Activated CD4-positive, alpha-beta memory T cell treated with anti-CD3 and anti-CD28 coated beads, Interleukin-2, amount 10 ng/mL, durations not matched to agents 7 days and 5 days (primary cell): ENCODE measurements at regions of chr12 and their contacts with region 1.

Region 1: DNA sequence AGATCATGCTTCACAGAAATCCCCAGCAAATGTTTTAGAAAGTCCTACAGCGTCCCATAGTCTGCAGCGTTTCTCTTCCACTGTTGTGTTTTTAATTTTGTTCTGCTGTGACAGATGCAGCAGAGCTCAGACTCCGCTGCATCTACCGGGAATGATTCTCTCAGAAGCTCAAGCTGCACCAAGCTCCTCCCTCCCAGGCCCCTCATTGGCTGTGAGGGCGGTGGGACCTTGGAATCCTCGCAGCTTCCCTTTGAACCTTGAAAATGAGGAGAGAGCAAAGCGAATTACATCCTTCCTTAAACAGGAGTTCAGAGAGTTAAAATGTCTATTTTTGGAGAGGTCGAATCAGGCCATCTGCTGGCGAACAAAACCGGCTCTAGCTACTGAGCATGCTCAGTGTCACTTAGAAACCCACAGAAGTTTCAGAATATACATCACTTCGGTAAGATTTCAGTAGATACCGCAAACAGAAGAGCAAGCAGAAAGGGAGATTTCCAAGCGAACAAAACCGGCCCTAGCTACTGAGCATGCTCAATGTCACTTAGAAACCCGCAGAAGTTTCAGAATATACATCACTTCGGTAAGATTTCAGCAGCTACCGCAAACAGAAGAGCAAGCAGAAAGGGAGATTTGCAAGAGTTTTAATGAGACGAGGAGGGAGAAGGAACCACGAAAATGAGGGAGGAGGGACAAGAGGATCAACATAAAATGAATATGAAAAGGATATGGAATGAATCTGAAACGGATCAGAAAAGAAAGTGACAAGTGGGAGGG is at the start of gene ABCD2:
- DNase-seq: peak; percentile 84
- H3K4me3 Mint-ChIP-seq: no peak within 1 kb of the TSS
- H3K27ac Mint-ChIP-seq: no peak within 1 kb of the TSS
- H3K4me1 Mint-ChIP-seq: peaks cover 31% of the 10 kb centered on the region
- H3K27me3 Mint-ChIP-seq: no peaks in the 10 kb centered on the region
- total RNA-seq, gene ABCD2: 19.6 TPM

Region 2: DNA sequence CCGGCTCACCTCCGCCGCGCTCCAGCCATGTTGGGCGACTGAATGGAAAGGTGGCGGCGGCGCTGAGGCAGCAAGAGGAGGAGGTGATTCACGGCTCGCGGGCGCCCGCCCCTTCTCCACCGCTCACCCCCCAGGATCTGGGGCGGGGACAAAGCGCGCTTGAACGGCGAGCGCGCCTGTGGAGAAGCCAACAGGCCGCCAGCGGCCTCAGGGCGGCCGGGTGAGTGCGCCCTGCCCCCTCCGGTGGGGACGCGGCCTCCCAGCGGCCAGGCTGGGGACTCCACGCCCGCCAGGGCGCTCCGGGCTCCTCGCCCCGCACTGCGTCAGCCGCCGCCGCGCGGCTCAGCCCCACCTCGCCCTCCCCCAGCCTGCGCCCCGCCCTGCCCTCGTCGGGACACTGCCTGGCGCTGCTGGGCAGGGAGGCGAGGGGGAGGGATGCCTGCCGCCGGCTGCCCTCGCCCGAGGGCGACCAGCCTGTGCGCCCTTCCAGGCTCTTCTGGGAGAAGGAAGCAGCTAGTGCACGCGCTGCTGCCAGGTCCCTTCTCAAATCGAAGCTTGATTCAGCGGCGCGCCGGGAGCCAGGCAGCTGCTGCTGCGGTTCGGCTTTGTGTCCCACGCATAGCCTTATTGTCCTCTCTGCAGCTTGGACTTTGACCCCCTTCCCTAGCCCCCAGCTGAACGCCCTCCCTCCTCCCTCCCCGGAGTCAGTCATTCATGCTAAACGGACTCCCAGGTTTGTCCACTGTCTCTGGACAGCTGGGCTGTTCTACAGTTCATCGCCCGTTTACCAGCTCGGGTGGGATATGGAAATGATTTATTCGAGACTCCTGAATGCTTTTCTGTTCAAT is 176.5 kb before region 1 on chr12 and contains the start of gene KIF21A:
- CTCF ChIA-PET with region 1: interaction called, 6 read pairs
- POLR2A ChIA-PET with region 1: interaction called, 39 read pairs
- DNase-seq: peak; percentile 93
- H3K4me3 Mint-ChIP-seq: peak within 1 kb of the TSS; percentile 80
- H3K27ac Mint-ChIP-seq: peak within 1 kb of the TSS; percentile 79
- H3K4me1 Mint-ChIP-seq: peaks cover 23% of the 10 kb centered on the region
- H3K27me3 Mint-ChIP-seq: no peaks in the 10 kb centered on the region
- total RNA-seq, gene KIF21A: 18.4 to 19.7 TPM

Region 3: GRCh38 chr12:39671898-39672875 is 52.3 kb after region 1 on chr12:
- CTCF ChIA-PET with region 1: interaction called, 8 read pairs
- POLR2A ChIA-PET with region 1: interaction called, 35 read pairs
- DNase-seq: no peak
- H3K4me3 Mint-ChIP-seq: no peak overlapping the region
- H3K27ac Mint-ChIP-seq: no peak overlapping the region
- H3K4me1 Mint-ChIP-seq: peaks cover 48% of the 10 kb centered on the region
- H3K27me3 Mint-ChIP-seq: no peaks in the 10 kb centered on the region

Region 4: DNA sequence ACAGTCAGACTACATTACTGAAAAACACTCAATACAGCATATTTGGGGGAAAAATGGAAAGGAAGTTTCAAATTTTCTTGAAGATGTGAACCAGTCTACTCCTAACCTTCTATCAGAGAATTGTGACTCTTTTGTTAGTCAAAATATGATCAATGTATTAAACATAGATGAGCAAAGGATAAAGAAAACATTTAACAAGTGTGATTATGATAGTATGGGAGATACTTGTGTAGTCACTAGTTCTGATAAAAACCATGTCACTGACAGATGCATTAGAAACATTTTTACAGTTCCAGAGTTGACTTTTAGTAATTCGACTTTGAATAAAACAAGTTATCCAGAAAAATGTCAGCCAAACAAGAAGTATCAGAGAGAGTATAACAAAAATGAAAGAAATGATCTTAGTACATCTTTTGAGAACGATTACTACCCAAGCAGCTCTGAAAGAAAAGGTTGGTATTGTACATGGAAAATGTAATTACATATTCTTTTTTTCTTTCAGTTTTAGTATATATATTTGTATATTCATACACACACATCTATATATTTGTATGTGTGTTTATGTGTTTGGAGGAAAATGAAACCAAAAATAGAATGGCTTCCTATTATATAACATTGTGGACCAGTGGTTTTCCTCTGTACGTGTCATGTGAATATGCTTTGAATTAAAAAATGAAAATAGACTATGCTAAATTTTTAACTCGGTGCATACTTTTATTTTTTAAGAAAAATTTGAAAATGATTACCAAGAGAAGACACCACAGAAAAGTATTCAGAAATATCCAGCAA is 63.0 kb after region 1 on chr12:
- CTCF ChIA-PET with region 1: interaction called, 17 read pairs
- POLR2A ChIA-PET with region 1: interaction called, 64 read pairs
- DNase-seq: no peak
- H3K4me3 Mint-ChIP-seq: peak overlapping the region; percentile 73
- H3K27ac Mint-ChIP-seq: peak overlapping the region; percentile 81
- H3K4me1 Mint-ChIP-seq: peaks cover 41% of the 10 kb centered on the region
- H3K27me3 Mint-ChIP-seq: peaks cover 4% of the 10 kb centered on the region

Region 5: GRCh38 chr12:39692258-39692853 is 72.5 kb after region 1 on chr12:
- CTCF ChIA-PET with region 1: interaction called, 14 read pairs
- POLR2A ChIA-PET with region 1: interaction called, 20 read pairs
- DNase-seq: no peak
- H3K4me3 Mint-ChIP-seq: no peak overlapping the region
- H3K27ac Mint-ChIP-seq: no peak overlapping the region
- H3K4me1 Mint-ChIP-seq: peaks cover under 1% of the 10 kb centered on the region
- H3K27me3 Mint-ChIP-seq: peaks cover 2% of the 10 kb centered on the region